PC-9 (cell line): ENCODE measurements at regions of chr1 and their contacts with region 1.

Region 1: DNA sequence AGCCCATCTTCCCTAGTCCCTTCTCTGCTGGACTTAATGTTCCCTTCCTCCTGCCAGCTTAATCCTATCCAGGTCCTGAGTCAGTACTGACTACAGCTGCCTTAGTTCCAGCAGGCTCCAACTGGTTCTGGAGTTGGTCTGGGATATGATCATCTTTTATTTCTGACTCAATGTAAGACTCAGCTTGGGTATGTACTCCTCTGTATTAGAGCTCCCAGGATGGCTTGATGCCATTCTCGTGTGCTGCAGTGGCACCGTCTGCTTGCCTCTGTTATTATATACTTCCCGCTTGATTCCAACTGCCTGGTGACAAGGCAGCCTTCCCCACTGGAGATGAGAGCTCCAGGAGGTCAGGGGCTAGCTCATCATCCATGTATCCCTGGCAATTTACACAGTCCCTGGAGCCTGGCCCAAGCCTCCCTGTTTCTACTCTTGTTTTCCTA is 164.4 kb upstream of the DPT start:
- DNase-seq: no peak
- H3K4me3 ChIP-seq: no peak overlapping the region
- H3K27ac ChIP-seq: no peak overlapping the region
- H3K4me1 ChIP-seq: no peaks in the 10 kb centered on the region
- H3K27me3 ChIP-seq: no peaks in the 10 kb centered on the region
- CTCF ChIP-seq: no peak

Region 2: DNA sequence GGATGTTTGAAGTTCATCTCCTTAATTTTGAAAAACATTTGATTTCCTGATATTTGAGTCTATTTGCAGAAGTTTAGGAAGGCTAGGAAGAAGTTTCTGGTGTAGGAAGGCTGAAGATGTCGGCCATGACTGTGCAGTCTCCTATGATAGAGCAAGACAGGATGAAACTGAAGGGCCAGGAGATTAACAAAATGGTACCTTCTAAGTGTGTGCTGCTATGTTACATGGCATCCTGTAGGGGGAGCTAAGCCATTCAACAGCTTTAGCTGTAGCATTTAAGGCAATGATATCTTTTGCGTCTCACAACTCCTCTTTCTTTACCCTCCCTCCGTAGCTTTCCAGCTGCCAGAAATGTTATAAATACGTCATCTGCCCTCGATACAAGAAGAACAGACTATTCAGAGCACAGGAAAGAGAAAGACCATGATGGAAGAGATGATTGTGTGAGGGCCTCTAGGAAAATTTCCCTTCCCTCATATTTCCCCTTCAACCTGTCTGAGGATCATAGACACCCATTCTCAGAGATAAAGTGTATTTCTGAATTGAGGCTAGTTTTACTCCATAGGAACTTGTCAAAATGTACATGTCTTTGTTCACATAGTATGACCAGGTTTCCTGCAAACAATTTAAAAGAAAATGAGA is 255.9 kb before region 1 on chr1:
- CTCF ChIA-PET with region 1: no interaction called
- POLR2A ChIA-PET with region 1: no interaction called
- intact Hi-C with region 1: no loop called
- DNase-seq: no peak
- H3K4me3 ChIP-seq: no peak overlapping the region
- H3K27ac ChIP-seq: peak overlapping the region; percentile 63
- H3K4me1 ChIP-seq: peaks cover 17% of the 10 kb centered on the region
- H3K27me3 ChIP-seq: no peaks in the 10 kb centered on the region
- CTCF ChIP-seq: peak; percentile 68

Region 3: GRCh38 chr1:168907053-168907452 is 13.7 kb after region 1 on chr1:
- CTCF ChIA-PET with region 1: no interaction called
- POLR2A ChIA-PET with region 1: interaction called, 12 read pairs
- intact Hi-C with region 1: no loop called
- DNase-seq: peak; percentile 52 to 97
- H3K4me3 ChIP-seq: peak overlapping the region; percentile 27; the same call in 1 of the 2 replicates
- H3K27ac ChIP-seq: peak overlapping the region; percentile 91
- H3K4me1 ChIP-seq: peaks cover 37% of the 10 kb centered on the region
- H3K27me3 ChIP-seq: no peaks in the 10 kb centered on the region
- CTCF ChIP-seq: no peak

Region 4: GRCh38 chr1:169941982-169942830 is 1048.8 kb after region 1 on chr1:
- CTCF ChIA-PET with region 1: no interaction called
- POLR2A ChIA-PET with region 1: no interaction called
- intact Hi-C with region 1: no loop called
- DNase-seq: peak in 1 of 2 experiments; percentile 45
- H3K4me3 ChIP-seq: no peak overlapping the region
- H3K27ac ChIP-seq: no peak overlapping the region
- H3K4me1 ChIP-seq: no peaks in the 10 kb centered on the region
- H3K27me3 ChIP-seq: no peaks in the 10 kb centered on the region
- CTCF ChIP-seq: no peak